Activated CD8-positive, alpha-beta T cell treated with anti-CD3 and anti-CD28 coated beads for 36 hours (primary cell): ENCODE measurements at regions of chr10 and their contacts with region 1.

Region 1: GRCh38 chr10:32332299-32332750 is 14.6 kb downstream of the EPC1 start:
- DNase-seq: peak; percentile 91
- ATAC-seq: peak; percentile 97
- H3K4me3 Mint-ChIP-seq: peak overlapping the region; percentile 73
- H3K27ac Mint-ChIP-seq: peak overlapping the region; percentile 96
- H3K4me1 Mint-ChIP-seq: peaks cover 89% of the 10 kb centered on the region
- H3K27me3 Mint-ChIP-seq: no peaks in the 10 kb centered on the region
- CTCF ChIP-seq: no peak

Region 2: DNA sequence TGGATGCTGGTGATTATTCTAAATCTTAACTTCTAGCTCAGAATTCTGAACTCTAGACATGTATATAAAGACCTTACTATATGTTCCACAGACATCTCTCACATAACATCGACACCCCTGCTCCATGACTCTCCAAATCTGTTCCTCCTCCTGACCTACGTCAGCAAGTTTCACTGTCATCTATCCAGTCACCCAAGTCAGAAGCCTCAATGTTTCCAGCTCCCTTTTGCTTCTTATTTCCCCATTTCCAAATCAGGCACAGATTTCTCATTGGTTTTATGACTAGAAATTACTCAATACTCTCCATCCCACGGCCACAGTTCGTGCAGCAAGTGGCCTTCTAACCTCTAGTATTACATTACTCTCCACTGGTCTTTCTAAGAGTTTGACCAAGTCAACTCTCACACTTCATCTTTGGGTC is 13.8 kb before region 1 on chr10:
- CTCF ChIA-PET with region 1: interaction called, 5 read pairs
- POLR2A ChIA-PET with region 1: interaction called, 49 read pairs
- intact Hi-C with region 1: no loop called
- DNase-seq: peak; percentile 35
- ATAC-seq: peak; percentile 60
- H3K4me3 Mint-ChIP-seq: peak overlapping the region; percentile 7
- H3K27ac Mint-ChIP-seq: peak overlapping the region; percentile 71
- H3K4me1 Mint-ChIP-seq: peaks cover 87% of the 10 kb centered on the region
- H3K27me3 Mint-ChIP-seq: no peaks in the 10 kb centered on the region
- CTCF ChIP-seq: no peak

Region 3: DNA sequence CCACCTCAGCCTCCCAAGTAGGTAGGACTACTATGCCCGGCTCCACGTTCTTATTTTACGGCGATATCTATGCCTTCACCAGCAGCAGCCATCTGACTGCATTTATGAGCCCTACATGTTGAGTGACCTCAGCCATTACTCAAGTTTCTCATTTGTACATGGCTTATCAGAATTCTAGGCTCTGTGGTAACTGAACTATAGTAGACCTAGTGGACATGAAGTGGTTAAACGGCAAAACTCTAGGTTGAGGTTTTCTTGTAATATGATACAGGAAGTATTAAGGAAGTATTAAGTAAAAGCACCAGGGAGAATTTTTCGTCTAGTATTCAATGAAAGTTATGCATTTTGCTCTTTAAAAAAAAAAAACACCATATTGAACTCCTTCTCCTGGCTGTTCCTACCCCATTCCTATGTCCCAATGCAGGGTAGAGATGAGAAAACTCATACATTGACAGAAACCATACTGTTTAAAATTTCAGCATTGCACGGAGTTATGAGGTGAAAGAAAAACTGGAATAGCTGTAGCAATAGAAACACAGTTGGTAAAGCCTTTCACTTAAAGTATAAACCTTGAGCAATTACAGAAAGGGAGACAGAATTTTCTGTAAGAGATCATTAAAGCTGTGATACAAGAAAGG is 54.4 kb after region 1 on chr10:
- CTCF ChIA-PET with region 1: no interaction called
- POLR2A ChIA-PET with region 1: no interaction called
- intact Hi-C with region 1: no loop called
- DNase-seq: no peak
- ATAC-seq: no peak
- H3K4me3 Mint-ChIP-seq: no peak overlapping the region
- H3K27ac Mint-ChIP-seq: no peak overlapping the region
- H3K4me1 Mint-ChIP-seq: peaks cover 11% of the 10 kb centered on the region
- H3K27me3 Mint-ChIP-seq: no peaks in the 10 kb centered on the region
- CTCF ChIP-seq: no peak

Region 4: GRCh38 chr10:32556783-32557395 is 224.6 kb after region 1 on chr10:
- CTCF ChIA-PET with region 1: no interaction called
- POLR2A ChIA-PET with region 1: no interaction called
- intact Hi-C with region 1: no loop called
- DNase-seq: no peak
- ATAC-seq: no peak
- H3K4me3 Mint-ChIP-seq: no peak overlapping the region
- H3K27ac Mint-ChIP-seq: no peak overlapping the region
- H3K4me1 Mint-ChIP-seq: peaks cover 7% of the 10 kb centered on the region
- H3K27me3 Mint-ChIP-seq: no peaks in the 10 kb centered on the region
- CTCF ChIP-seq: no peak